ENCODE measurements at regions of chr19 and their contacts with region 1.

Region 1: GRCh38 chr19:19366612-19367396 is 38.7 kb upstream of the GATAD2A start:
- DNase-seq: peak in 6 of 10 donors; percentile 34 to 92 (median 50)

Region 2: DNA sequence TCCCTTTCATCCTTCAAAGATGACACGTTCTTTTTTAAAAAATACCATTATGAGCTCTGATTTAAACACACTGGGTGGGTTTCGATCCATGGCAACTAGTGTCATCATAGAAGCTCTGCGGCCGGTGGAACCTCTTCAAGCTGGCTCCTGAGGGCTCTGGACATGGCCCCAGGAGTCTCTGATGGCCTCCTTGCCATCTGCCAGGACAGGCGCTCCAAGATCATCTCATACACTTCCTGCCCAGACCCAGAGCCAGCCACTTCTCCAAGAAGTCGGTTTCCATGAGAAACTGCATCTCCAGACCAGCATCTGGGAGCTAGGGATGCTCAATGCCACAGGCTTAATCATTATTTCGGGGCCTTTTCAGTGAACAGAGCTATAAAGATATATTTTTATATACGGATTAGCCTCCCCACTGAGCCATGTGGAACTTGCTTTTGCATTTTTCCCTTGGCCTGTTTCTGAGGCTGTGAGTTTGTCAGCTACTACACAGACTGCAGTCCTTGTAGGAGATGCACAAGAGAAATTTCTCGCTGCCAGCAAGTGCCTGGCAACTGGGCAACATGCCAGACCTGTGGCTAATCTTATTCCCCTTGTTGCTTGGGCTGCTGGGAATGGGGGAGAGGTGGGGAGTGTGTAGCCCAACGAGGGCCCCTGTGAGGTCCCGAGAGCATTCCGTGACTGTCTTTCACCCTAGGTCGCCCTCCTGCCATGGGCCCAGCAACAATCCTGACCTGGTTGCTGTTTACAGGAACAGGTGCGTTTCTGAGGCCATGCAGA is 62.4 kb before region 1 on chr19:
- intact Hi-C with region 1: no loop called
- DNase-seq: peak in 9 of 10 donors; percentile 45 to 92 (median 65)

Region 3: DNA sequence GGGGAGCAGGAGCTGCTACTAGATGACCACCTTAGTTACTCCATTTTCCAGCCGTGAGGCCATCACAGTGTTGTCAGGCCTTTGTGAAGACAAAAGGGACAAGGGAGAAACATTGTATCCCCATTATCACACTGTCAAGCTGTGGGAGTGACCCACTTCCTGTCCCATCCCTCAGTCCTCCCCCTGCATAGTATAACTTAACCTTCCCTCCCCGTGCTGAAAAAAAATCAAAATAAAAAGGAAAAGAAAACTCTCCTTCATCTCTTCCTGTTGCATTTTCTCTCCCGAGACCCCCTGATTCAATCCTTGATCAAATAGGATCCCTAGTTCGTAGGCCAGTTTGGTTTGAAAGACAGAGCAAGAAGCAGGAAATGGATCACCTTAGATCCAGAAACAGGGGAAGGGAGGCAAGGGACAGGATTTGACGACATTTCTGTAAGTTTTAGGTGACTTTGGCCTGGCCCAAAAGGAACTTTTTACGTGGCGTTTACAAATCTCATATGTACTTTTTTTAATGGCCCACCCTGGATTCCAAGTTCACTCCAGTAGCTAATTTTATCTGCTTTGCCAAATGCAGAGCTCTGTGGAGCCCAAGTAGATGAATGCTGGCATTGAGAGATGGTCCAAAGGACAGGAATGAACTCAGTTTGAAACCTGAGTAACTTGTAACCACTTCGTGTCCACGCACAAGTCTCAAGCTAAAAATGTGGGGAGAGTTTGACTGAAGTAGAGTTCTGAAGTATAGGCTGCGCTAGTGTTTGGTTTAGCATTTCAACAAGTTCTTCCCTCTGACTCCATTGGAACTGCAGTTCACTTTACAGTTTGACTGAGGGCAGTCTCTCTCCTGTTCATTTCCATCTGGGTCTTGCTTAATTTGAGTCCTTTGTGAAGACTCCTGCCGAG is 22.0 kb after region 1 on chr19:
- intact Hi-C with region 1: no loop called
- DNase-seq: no peak

Region 4: DNA sequence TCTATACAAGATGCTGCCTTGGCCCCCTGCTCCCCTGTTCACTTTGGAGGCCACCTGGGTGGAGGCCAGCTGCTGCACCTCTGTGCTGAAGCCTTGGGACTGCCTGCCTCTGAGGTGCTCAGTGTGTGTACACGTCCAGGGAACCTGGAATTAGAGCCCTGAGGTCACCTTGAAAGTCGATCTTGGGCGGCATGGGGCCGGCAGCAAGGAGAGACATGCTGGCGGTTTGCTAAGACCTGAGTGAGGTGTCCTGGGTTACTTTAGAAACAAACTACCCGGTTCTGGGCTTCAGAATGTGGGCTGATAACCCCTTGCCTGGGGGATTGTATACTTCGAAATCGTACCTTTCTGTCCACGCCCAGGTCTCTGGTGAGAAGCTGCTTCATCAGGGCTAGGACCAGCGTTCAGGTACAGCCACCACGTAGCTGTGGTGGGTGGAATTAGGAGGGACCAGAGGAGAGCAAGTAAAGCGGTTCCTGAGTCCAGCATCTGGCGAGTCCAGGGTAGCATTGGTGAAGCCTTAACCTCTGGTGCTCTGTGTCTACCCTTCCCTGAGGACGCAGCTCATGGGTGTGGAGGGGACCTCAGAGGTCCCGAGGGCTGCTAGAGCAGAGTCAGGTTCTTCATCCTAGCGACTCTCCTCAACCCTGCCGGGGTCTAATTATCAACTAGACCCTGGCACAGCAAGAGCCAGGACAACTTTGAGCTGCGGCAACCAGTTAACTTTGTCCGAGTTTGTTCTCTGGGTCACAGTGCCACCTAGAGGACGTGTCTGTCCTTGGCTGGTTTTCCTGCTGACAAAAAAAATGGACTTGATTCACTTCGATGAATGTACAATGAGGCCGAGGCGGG is 123.2 kb after region 1 on chr19:
- intact Hi-C with region 1: loop called (anchors 1 kb)
- DNase-seq: peak; percentile 39 to 95 (median 80)